Kidney (tissue), 22 donors: ENCODE measurements at regions of chr9 and their contacts with region 1.

Region 1: DNA sequence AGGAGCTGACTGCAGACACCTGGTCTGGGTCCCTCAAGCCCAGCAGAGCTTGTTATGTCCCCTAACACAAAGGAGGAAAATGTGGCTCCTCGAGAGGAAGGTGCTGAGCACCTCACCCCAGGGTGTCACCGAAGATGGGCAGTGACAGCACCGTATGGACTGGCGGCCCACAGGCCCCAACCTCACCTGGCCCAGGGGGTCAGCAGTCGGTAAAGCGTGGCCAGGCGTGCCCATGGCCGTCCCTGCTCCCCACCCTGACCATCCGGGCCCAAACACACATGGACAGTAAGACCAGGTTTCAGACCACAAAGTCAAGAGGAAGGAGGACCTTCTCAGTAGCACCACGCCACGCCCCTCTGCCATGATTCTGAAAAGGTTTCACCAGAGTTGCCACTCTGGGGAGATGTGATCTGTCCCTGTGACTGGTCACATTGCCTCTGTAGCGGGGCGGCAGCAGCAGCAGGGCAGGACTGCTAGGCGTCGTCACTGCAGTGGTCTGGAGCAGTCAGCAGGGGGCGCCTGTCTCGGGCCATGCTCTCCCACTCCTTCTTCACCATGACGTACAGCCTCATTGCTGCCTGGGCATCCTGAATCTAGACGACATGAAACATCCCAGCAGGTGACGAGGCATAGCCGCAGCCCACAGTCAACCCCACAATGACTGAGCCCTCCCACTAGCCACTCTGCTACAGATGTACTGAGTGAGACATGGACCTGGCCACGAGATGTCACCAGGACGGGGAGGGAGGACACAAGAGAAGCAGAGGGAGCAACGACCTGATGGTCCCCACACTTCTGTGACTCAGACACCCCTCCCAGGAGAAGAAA is 11.1 kb downstream of the REXO4 start:
- DNase-seq: peak; percentile 78 to 90 (median 80)
- H3K4me3 ChIP-seq: no peak overlapping the region
- H3K27ac ChIP-seq: peak overlapping the region in 1 of 2 donors; percentile 9
- H3K4me1 ChIP-seq: no peaks in the 10 kb centered on the region
- H3K27me3 ChIP-seq: no peaks in the 10 kb centered on the region
- CTCF ChIP-seq: peak; percentile 95

Region 2: DNA sequence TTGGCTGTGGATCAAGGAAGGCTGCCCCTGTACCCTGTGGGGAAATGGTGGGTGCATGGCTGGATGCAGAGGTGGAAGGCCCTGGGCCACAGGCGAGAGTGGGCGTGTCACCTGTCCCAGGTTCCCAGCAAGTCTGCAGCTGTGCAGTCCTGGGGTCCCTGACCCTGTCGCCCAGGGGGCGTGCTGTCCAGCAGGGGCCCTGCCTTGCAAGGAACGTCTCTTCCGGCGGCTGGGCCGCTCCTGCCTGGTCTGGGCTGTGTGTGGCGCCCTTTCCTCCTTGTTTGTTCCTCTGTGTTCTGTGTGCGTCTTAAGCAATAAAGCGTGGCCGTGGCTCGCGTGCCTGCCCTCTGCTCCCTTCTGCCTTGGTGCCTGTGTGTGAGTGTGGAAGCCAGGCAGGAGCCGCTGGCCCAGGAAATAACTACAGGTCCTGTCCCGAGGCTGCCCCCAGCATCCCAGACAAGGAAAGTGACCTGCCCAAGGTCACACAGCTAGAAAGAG is 63.8 kb after region 1 on chr9:
- intact Hi-C with region 1: no loop called
- DNase-seq: peak in 1 of 5 donors; percentile 59
- H3K4me3 ChIP-seq: no peak overlapping the region
- H3K27ac ChIP-seq: no peak overlapping the region
- H3K4me1 ChIP-seq: no peaks in the 10 kb centered on the region
- H3K27me3 ChIP-seq: no peaks in the 10 kb centered on the region
- CTCF ChIP-seq: no peak

Region 3: DNA sequence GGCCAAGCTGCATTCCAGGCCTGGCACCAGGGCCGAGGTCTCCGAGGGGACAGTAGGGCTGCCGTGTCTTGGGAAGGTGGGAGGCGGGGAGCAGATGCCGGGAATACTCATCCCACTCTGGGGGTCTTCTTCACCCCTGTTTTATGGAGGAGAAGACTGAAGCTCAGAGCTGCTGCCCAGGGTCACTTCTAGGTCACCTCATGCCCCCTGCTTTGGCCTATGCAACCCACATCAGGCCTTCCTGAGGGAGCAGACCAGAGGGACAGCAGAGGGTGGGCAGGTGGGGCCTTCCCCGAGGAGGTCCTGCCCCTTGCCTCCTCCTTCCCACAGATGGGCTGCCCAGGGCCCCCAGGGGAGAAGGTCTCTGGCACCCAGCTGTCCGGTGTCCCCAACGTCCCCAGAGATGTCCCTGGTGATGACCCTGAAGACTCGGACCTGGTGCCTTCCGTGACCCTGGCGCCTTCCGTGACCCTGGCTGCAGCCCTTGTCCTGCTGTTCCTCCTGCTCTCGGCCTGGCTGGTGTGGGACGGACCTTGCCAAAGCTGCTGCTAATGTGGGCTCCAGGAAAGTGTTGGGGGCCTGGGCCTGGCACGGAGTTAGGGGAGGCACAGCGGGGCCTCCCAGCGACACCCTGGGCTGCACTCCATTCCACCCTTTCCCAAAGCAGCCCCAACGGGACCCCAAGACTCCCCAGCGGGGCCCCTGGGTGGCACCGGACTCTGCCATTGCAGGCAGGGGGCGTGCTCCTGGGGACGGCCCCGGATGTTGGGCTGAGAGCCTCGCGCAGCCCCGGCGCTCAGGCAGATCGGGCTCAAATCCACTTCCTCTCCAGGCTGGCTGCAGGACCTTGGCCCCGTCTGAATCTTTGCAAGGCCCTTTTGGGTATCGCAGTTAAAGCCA is 78.9 kb after region 1 on chr9:
- intact Hi-C with region 1: loop called (anchors 5 kb)
- DNase-seq: peak in 1 of 5 donors; percentile 76
- H3K4me3 ChIP-seq: no peak overlapping the region
- H3K27ac ChIP-seq: no peak overlapping the region
- H3K4me1 ChIP-seq: no peaks in the 10 kb centered on the region
- H3K27me3 ChIP-seq: no peaks in the 10 kb centered on the region
- CTCF ChIP-seq: no peak